ENCODE measurements at regions of chrX and their contacts with region 1.

Region 1: DNA sequence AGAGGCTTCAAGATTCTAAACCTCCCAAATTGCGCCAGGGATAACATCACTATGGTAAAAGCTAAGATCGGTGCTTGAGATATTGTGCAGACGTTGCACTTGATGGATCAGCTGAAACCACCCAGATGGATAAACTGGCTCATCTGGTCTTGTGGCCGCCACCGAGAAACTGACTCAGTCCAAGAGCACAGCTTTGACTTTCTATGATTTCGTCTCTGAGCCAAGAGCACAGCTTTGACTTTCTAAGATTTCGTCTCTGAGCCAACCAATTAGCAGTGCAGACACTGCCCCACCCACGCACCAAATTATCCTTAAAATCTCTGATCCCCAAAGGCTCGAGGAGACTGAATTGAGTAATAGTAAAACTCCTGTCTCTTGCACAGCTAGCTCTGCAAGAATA is 687.2 kb downstream of the FAM133A start:
- DNase-seq: no peak
- H3K4me3 ChIP-seq: no peak overlapping the region
- H3K27ac ChIP-seq: no peak overlapping the region
- H3K27me3 ChIP-seq: no peaks in the 10 kb centered on the region
- CTCF ChIP-seq: no peak

Region 2: GRCh38 chrX:93120805-93121204 is 1240.4 kb before region 1 on chrX:
- CTCF ChIA-PET with region 1: no interaction called
- POLR2A ChIA-PET with region 1: interaction called, 15 read pairs
- DNase-seq: no peak
- H3K4me3 ChIP-seq: no peak overlapping the region
- H3K27ac ChIP-seq: no peak overlapping the region
- H3K27me3 ChIP-seq: no peaks in the 10 kb centered on the region
- CTCF ChIP-seq: no peak

Measured in AG04450 (cell line).